ENCODE measurements at regions of chr6 and their contacts with region 1.

Region 1: DNA sequence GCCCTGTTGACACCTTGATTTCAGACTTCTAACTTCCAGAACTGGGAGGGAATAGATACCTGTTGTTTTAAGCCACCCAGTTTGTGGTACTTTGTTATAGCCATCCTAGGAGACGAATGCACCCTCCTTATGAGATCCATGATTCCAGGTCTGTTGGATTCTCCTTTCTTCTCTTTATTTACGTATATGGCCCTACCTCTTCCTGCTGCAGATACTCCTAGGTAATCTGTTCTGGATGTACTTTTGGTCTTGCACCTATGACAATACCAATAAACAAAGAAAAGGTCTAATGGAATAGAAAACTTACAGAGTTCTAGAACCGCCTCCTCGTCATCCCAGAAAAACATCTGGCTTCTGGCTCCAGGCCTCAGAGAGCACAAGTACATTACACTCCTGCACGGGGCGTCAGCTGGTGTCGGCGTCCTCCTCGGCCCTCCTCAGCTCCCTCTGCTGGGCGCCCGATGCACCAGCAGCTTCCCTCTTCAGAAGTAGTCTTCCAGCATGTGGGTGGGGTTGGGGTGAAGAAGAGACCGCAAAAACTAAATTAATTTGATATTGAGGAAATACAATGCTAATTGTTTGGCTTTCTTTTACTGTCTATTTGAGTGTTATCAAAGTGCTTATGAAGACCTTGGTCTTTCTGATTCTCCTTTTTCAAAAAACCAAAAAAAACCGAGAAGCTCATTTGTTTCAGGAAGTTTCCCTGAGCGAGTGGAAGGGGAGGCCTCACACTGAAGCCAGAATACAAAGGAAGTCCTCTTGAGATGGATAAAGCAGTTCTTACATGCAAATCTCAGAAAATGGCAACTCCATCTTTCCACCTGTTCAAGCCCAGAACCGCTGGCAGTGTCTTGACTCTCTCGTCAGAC is 9.7 kb upstream of the ATXN1 start:
- DNase-seq: peak; percentile 84
- ATAC-seq: peak; percentile 69
- H3K4me3 Mint-ChIP-seq: peak overlapping the region; percentile 36
- H3K27ac Mint-ChIP-seq: no peak overlapping the region
- H3K4me1 Mint-ChIP-seq: peaks cover 54% of the 10 kb centered on the region
- H3K27me3 Mint-ChIP-seq: no peaks in the 10 kb centered on the region

Region 2: GRCh38 chr6:16822975-16823717 is 52.2 kb after region 1 on chr6:
- CTCF ChIA-PET with region 1: no interaction called
- DNase-seq: no peak
- ATAC-seq: no peak
- H3K4me3 Mint-ChIP-seq: no peak overlapping the region
- H3K27ac Mint-ChIP-seq: no peak overlapping the region
- H3K4me1 Mint-ChIP-seq: peaks cover 11% of the 10 kb centered on the region
- H3K27me3 Mint-ChIP-seq: peaks cover 36% of the 10 kb centered on the region

Region 3: DNA sequence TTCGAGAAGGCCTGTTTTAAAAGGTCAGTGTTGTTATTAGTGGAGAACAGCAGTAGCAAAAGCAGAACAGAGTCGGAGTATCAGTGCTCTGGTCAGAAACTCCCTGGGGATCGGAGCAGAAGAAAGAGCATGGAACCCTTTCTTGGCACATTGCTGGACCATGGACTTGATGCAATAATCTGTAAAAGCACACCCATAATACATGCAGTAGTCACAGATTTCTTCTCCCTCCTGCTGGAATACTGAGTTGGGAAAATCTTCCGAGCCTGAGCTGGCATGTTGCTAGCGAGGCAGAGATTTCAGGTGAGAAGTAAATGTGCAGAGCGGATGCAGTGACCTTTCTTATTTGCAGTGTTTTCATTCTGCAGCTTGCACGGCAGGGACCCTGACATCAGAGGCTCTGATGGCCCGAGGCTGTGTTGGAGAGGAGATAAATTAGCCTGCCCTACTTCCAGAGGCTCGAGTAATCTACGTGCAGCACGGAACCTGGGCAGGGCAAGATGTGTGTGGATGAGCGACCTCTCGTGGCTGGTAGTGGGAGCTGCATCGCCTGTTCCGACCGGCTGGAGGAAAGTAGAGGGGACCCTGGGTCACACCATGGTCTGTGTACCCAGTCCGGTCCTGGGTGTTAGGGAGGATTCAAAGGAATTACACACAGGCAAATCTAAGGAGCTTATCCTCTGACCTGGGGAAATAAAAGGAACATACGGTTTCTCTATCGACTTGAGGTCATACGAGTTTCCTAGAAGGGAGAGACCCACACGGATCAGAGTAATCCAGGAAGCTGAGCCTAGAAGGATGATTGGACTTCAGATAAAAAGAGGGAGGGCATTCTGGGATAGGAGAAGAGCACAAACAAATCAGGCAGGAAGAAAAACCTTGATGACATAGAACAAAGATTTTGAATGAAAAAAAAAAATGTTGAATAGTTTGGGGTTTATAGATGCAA is 193.9 kb after region 1 on chr6:
- CTCF ChIA-PET with region 1: interaction called, 13 read pairs
- DNase-seq: peak; percentile 76
- ATAC-seq: peak; percentile 70
- H3K4me3 Mint-ChIP-seq: no peak overlapping the region
- H3K27ac Mint-ChIP-seq: no peak overlapping the region
- H3K4me1 Mint-ChIP-seq: peaks cover 6% of the 10 kb centered on the region
- H3K27me3 Mint-ChIP-seq: peaks cover 15% of the 10 kb centered on the region

Measured in activated CD8-positive, alpha-beta memory T cell treated with anti-CD3 and anti-CD28 coated beads, Interleukin-2, amount 10 ng/mL, durations not matched to agents 7 days and 5 days (primary cell).